Activated CD4-positive, alpha-beta T cell treated with anti-CD3 and anti-CD28 coated beads for 36 hours (primary cell): ENCODE measurements at regions of chr3 and their contacts with region 1.

Region 1: DNA sequence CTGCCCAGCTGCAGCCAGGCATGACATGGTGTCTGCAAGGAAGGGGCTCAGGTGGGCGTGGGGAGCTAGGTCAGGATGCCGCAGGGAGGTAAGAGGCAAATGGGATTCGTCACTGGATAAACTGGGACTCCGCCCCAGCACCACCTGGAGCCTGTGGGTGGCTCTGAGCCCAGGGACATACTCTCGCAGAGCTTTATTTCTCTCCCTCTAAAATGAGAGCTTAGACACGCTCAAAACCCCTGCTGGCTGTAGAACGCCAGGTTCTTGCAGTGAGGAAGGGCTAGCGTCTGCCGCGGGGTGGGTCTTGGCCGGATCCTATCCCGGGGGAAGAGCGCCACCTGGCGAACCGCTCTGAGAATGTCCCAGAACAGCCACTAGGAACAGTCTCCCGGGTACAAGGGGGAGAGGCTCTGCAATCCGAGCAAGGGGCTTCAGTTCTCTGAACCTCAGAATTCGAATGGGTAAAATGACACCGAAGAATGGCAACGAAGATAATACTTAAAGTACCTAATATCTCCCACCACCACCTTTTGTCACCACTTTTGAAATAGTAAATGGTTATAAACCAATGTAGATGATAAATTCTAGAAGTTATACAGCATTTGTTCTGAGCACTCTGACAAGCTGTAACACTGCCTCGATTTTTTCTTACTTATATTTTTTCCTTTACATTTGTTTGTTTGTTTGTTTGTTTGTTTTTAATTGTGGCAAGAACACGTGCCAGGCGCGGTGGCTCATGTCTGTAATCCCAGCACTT is 53.2 kb upstream of the SRGAP3 start:
- DNase-seq: peak; percentile 88
- ATAC-seq: peak; percentile 85
- H3K4me3 Mint-ChIP-seq: peak overlapping the region; percentile 15
- H3K27ac Mint-ChIP-seq: no peak overlapping the region
- H3K4me1 Mint-ChIP-seq: peaks cover 16% of the 10 kb centered on the region
- H3K27me3 Mint-ChIP-seq: peaks cover 5% of the 10 kb centered on the region

Region 2: GRCh38 chr3:8769088-8769822 is 533.3 kb before region 1 on chr3 and contains the start of gene OXTR:
- CTCF ChIA-PET with region 1: no interaction called
- POLR2A ChIA-PET with region 1: no interaction called
- intact Hi-C with region 1: loop called in 1 of 2 experiments (anchors 5 kb)
- DNase-seq: peak; percentile 79
- ATAC-seq: peak; percentile 93
- H3K4me3 Mint-ChIP-seq: peak within 1 kb of the TSS; percentile 30
- H3K27ac Mint-ChIP-seq: no peak within 1 kb of the TSS
- H3K4me1 Mint-ChIP-seq: peaks cover 12% of the 10 kb centered on the region
- H3K27me3 Mint-ChIP-seq: peaks cover 39% of the 10 kb centered on the region
- total RNA-seq, gene OXTR: 0.70 to 0.91 TPM

Region 3: DNA sequence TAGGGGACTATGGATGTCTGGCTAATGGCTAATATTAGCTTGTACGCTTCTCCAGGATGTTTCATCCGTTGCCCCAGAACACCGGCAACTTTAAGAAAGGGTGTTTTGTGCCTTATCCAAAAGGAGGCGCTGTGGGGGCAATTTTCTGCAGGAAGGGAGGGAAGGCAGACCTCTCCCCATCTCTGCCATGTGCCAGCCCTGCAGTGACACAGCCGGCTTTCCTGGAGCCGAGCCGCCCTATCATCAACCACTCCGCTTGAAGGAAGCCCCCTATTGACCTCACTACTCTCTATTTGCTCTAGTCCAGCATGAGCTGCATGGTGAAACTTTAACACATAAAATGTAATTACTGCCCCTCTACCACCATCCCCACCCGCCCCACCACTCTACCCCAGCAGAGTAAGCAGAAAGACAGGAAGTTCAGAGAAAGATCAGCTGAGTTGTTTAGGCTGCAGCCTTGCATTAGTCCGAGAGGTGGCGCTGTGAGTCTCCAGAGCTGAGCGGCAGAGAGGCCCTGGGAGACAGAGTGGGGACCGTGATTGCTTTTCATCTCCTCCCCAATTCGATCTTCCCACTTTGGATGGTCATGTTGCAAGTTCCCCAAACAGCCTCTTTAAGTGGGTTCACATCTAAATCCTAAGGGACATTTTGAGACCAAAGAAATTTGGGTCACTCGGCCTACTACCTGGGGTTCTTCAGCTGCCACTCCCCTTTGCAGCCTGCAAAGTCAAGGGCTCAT is 314.8 kb before region 1 on chr3:
- CTCF ChIA-PET with region 1: interaction called, 56 read pairs
- POLR2A ChIA-PET with region 1: no interaction called
- intact Hi-C with region 1: loop called (anchors 1 kb)
- DNase-seq: peak; percentile 81
- ATAC-seq: peak; percentile 96
- H3K4me3 Mint-ChIP-seq: no peak overlapping the region
- H3K27ac Mint-ChIP-seq: no peak overlapping the region
- H3K4me1 Mint-ChIP-seq: no peaks in the 10 kb centered on the region
- H3K27me3 Mint-ChIP-seq: no peaks in the 10 kb centered on the region

Region 4: DNA sequence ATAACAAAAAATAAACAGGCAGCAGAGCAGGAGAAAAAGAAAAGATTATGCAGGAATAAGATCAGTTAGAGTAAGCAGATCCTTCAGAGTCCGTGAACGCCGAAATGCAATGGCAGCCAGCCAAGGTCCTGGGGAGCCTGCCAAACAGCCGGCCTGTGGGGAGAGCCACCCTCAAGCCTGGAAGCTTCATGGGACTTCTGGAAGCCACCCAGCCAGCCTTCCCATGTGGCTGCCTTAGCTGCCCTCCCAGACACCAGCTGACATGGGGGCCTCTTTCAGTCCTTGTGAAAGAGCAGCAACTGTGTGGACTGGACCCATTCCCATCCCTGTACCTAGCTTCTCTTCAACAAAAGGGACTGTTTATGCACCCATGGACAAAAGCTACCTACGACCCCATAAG is 274.5 kb before region 1 on chr3:
- CTCF ChIA-PET with region 1: interaction called, 3 read pairs
- POLR2A ChIA-PET with region 1: no interaction called
- intact Hi-C with region 1: loop called in 1 of 2 experiments (anchors 1 kb)
- DNase-seq: no peak
- ATAC-seq: no peak
- H3K4me3 Mint-ChIP-seq: no peak overlapping the region
- H3K27ac Mint-ChIP-seq: no peak overlapping the region
- H3K4me1 Mint-ChIP-seq: no peaks in the 10 kb centered on the region
- H3K27me3 Mint-ChIP-seq: no peaks in the 10 kb centered on the region

Region 5: DNA sequence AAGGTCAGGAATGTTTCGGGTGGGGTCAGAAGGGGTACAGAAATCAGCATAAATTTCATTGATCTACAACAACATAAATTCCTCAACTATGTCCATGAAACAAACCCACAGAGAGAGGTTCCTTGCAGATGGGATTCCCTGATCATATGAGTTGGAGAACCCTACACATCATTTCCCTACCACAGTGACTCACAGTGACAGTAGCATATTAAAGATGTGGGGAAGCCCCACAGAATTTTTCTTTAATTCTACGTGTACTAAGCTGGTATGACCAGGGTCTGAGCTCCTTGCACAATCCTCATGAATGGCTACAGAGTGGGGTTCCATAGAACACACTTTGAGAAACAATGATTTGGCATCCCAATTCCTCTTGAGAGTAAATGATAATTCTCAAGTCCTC is 222.4 kb before region 1 on chr3:
- CTCF ChIA-PET with region 1: no interaction called
- POLR2A ChIA-PET with region 1: no interaction called
- intact Hi-C with region 1: loop called in 1 of 2 experiments (anchors 5 kb)
- DNase-seq: no peak
- ATAC-seq: peak; percentile 91
- H3K4me3 Mint-ChIP-seq: no peak overlapping the region
- H3K27ac Mint-ChIP-seq: no peak overlapping the region
- H3K4me1 Mint-ChIP-seq: peaks cover 6% of the 10 kb centered on the region
- H3K27me3 Mint-ChIP-seq: no peaks in the 10 kb centered on the region

Region 6: GRCh38 chr3:9224490-9224889 is 78.1 kb before region 1 on chr3:
- CTCF ChIA-PET with region 1: interaction called, 8 read pairs
- POLR2A ChIA-PET with region 1: no interaction called
- intact Hi-C with region 1: loop called in 1 of 2 experiments (anchors 2 kb)
- DNase-seq: peak; percentile 67
- ATAC-seq: peak; percentile 96
- H3K4me3 Mint-ChIP-seq: no peak overlapping the region
- H3K27ac Mint-ChIP-seq: peak overlapping the region; percentile 52
- H3K4me1 Mint-ChIP-seq: peaks cover 11% of the 10 kb centered on the region
- H3K27me3 Mint-ChIP-seq: no peaks in the 10 kb centered on the region

Region 7: GRCh38 chr3:9266716-9267115 is 35.9 kb before region 1 on chr3:
- CTCF ChIA-PET with region 1: no interaction called
- POLR2A ChIA-PET with region 1: no interaction called
- intact Hi-C with region 1: no loop called
- DNase-seq: no peak
- ATAC-seq: no peak
- H3K4me3 Mint-ChIP-seq: no peak overlapping the region
- H3K27ac Mint-ChIP-seq: no peak overlapping the region
- H3K4me1 Mint-ChIP-seq: no peaks in the 10 kb centered on the region
- H3K27me3 Mint-ChIP-seq: no peaks in the 10 kb centered on the region

Region 8: GRCh38 chr3:9280451-9281219 is 22.0 kb before region 1 on chr3:
- CTCF ChIA-PET with region 1: interaction called, 14 read pairs
- POLR2A ChIA-PET with region 1: no interaction called
- intact Hi-C with region 1: no loop called
- DNase-seq: no peak
- ATAC-seq: no peak
- H3K4me3 Mint-ChIP-seq: no peak overlapping the region
- H3K27ac Mint-ChIP-seq: no peak overlapping the region
- H3K4me1 Mint-ChIP-seq: no peaks in the 10 kb centered on the region
- H3K27me3 Mint-ChIP-seq: no peaks in the 10 kb centered on the region

Region 9: GRCh38 chr3:9826815-9827567 is 524.4 kb after region 1 on chr3:
- CTCF ChIA-PET with region 1: no interaction called
- POLR2A ChIA-PET with region 1: no interaction called
- intact Hi-C with region 1: no loop called
- DNase-seq: peak; percentile 50
- ATAC-seq: peak; percentile 84
- H3K4me3 Mint-ChIP-seq: no peak overlapping the region
- H3K27ac Mint-ChIP-seq: no peak overlapping the region
- H3K4me1 Mint-ChIP-seq: peaks cover 7% of the 10 kb centered on the region
- H3K27me3 Mint-ChIP-seq: no peaks in the 10 kb centered on the region